ENCODE measurements at regions of chr6 and their contacts with region 1.

Region 1: DNA sequence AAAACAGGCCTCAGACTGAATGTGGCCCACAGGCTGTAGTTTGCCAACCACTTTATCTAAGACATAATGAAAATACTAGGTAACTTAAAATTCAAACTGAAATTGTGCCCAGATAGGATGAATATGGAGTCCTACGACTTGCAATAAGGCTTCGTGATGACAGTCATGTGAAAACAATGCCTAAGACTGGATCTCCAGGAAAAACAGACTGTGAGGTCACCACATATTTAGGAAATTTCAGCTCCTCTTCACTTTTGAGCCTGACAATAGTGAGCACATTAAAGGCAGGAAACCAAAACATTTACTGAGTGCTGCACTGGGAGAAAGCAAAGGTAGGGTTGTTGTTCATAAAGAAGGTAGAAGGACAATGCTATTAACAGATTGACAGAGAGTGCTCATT is 50.0 kb downstream of the RTN4IP1 start:
- DNase-seq: no peak
- ATAC-seq: no peak
- H3K4me3 ChIP-seq: no peak overlapping the region
- H3K4me3 Mint-ChIP-seq: no peak overlapping the region
- H3K27ac ChIP-seq: no peak overlapping the region
- H3K27ac Mint-ChIP-seq: no peak overlapping the region
- H3K4me1 ChIP-seq: no peaks in the 10 kb centered on the region
- H3K4me1 Mint-ChIP-seq: no peaks in the 10 kb centered on the region
- H3K27me3 ChIP-seq: no peaks in the 10 kb centered on the region
- H3K27me3 Mint-ChIP-seq: no peaks in the 10 kb centered on the region
- CTCF ChIP-seq: no peak

Region 2: GRCh38 chr6:106477790-106478189 is 101.5 kb before region 1 on chr6:
- CTCF ChIA-PET with region 1: no interaction called
- POLR2A ChIA-PET with region 1: no interaction called
- intact Hi-C with region 1: no loop called
- DNase-seq: no peak
- ATAC-seq: no peak
- H3K4me3 ChIP-seq: no peak overlapping the region
- H3K4me3 Mint-ChIP-seq: no peak overlapping the region
- H3K27ac ChIP-seq: no peak overlapping the region
- H3K27ac Mint-ChIP-seq: no peak overlapping the region
- H3K4me1 ChIP-seq: peaks cover 7 to 8% of the 10 kb centered on the region in 2 donors
- H3K4me1 Mint-ChIP-seq: peaks cover 11% of the 10 kb centered on the region
- H3K27me3 ChIP-seq: no peaks in the 10 kb centered on the region
- H3K27me3 Mint-ChIP-seq: no peaks in the 10 kb centered on the region
- CTCF ChIP-seq: no peak

Region 3: DNA sequence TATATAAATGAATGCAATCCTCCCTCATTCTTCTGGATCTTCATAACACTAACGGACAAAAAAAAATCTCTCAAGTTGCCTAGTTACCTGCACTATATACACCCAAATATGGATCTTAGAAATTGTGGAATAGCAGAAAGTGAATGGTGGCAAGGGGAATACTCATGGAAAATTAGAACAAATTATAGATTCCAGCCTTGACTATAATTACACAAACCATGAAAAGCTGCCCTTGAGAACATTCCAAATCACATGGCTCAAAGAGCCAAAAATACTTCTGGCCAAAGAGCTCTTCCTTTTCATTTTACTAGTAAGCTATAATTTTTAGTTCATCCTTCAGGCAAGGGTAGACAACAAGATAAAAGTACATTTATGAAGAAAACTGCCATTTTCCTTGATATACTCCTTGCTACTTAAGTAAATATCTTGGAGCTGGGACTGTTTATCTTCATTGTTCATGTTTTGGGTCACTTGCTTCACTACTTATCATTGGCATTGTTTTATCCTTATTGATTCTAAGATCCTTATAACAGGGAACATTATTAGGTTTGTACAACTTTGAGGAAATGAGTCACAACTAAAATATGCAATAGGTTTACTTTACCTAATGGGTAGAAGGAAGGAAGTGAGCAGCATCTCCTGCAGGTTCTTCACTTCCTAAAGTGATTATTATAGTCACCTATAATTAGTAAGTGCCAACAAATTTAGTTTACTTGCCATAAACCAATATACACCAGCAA is 442.3 kb after region 1 on chr6:
- CTCF ChIA-PET with region 1: no interaction called
- POLR2A ChIA-PET with region 1: interaction called, 13 read pairs
- intact Hi-C with region 1: no loop called
- DNase-seq: no peak
- ATAC-seq: no peak
- H3K4me3 ChIP-seq: no peak overlapping the region
- H3K4me3 Mint-ChIP-seq: no peak overlapping the region
- H3K27ac ChIP-seq: peak overlapping the region in 1 of 2 donors; percentile 4
- H3K27ac Mint-ChIP-seq: peak overlapping the region; percentile 2
- H3K4me1 ChIP-seq: peaks cover 0 to 8% of the 10 kb centered on the region in 2 donors
- H3K4me1 Mint-ChIP-seq: peaks cover 10% of the 10 kb centered on the region
- H3K27me3 ChIP-seq: no peaks in the 10 kb centered on the region
- H3K27me3 Mint-ChIP-seq: no peaks in the 10 kb centered on the region
- CTCF ChIP-seq: no peak

Measured in B cell (primary cell).